ENCODE measurements at regions of chr12 and their contacts with region 1.

Region 1: GRCh38 chr12:1533602-1534304 is 60.6 kb downstream of the FBXL14 start:
- DNase-seq: peak; percentile 87
- H3K4me3 Mint-ChIP-seq: peak overlapping the region; percentile 80
- H3K27ac Mint-ChIP-seq: peak overlapping the region; percentile 32
- H3K4me1 Mint-ChIP-seq: peaks cover 25% of the 10 kb centered on the region
- H3K27me3 Mint-ChIP-seq: peaks cover 64% of the 10 kb centered on the region

Region 2: GRCh38 chr12:1474041-1474573 is 59.6 kb before region 1 on chr12:
- intact Hi-C with region 1: loop called (anchors 5 kb)
- DNase-seq: peak; percentile 66
- H3K4me3 Mint-ChIP-seq: no peak overlapping the region
- H3K27ac Mint-ChIP-seq: no peak overlapping the region
- H3K4me1 Mint-ChIP-seq: peaks cover 5% of the 10 kb centered on the region
- H3K27me3 Mint-ChIP-seq: no peaks in the 10 kb centered on the region

Region 3: GRCh38 chr12:1553987-1554982 is 20.5 kb after region 1 on chr12:
- intact Hi-C with region 1: loop called (anchors 1 kb)
- DNase-seq: peak; percentile 64
- H3K4me3 Mint-ChIP-seq: peak overlapping the region; percentile 18
- H3K27ac Mint-ChIP-seq: peak overlapping the region; percentile 62
- H3K4me1 Mint-ChIP-seq: peaks cover 6% of the 10 kb centered on the region
- H3K27me3 Mint-ChIP-seq: peaks cover 9% of the 10 kb centered on the region

Region 4: GRCh38 chr12:2163172-2163941 is 629.6 kb after region 1 on chr12:
- intact Hi-C with region 1: no loop called
- DNase-seq: no peak
- H3K4me3 Mint-ChIP-seq: no peak overlapping the region
- H3K27ac Mint-ChIP-seq: no peak overlapping the region
- H3K4me1 Mint-ChIP-seq: no peaks in the 10 kb centered on the region
- H3K27me3 Mint-ChIP-seq: peaks cover 3% of the 10 kb centered on the region

Measured in activated CD4-positive, alpha-beta T cell treated with anti-CD3 and anti-CD28 coated beads, Interleukin-2, amount 10 ng/mL, durations not matched to agents 24 days and 14 days (primary cell).